PC-9 (cell line): ENCODE measurements at regions of chr1 and their contacts with region 1.

Region 1: DNA sequence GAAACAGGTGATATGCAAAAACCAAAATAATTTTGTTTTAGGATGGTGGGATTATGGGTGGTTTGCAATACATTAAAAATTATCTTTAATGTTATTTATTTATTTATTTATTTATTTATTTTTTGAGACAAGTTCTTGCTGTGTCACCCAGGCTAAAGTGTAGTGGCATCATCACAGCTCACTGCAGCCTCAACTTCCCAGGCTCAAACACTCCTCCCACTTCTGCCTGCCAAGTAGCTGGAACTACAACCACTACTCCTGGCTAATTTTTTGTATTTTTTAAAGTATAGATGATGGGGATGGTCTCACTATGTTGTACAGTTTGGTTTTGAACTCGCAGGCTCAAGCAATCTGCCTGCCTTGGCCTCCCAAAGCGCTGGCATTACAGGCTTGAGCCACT is 6.5 kb upstream of the PYCR2 start:
- DNase-seq: no peak
- H3K4me3 ChIP-seq: no peak overlapping the region
- H3K27ac ChIP-seq: no peak overlapping the region
- H3K4me1 ChIP-seq: no peaks in the 10 kb centered on the region
- H3K27me3 ChIP-seq: no peaks in the 10 kb centered on the region
- CTCF ChIP-seq: no peak

Region 2: DNA sequence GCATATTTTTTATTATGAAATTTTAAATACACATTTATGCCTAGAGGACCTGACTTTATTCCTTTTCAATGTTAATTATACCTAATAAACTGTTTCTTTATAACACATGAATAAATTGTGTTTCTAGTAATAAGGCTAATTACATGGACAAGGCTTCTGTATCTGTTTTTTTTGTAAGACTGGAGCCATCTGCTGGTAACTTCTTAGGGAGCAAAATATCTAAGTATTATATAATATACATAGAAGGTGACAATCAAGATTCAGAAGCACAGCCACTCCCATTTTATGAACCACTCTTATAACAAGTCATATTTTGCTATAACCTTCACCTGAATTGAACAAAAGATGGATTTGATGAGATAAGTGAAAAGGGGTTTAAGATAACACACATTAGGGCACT is 586.9 kb before region 1 on chr1:
- CTCF ChIA-PET with region 1: interaction called, 12 read pairs
- POLR2A ChIA-PET with region 1: no interaction called
- intact Hi-C with region 1: no loop called
- DNase-seq: peak in 1 of 2 experiments; percentile 41
- H3K4me3 ChIP-seq: no peak overlapping the region
- H3K27ac ChIP-seq: no peak overlapping the region
- H3K4me1 ChIP-seq: no peaks in the 10 kb centered on the region
- H3K27me3 ChIP-seq: no peaks in the 10 kb centered on the region
- CTCF ChIP-seq: peak; percentile 63; the same call in 1 of the 2 replicates